Activated CD8-positive, alpha-beta T cell treated with anti-CD3 and anti-CD28 coated beads for 36 hours (primary cell): ENCODE measurements at regions of chr6 and their contacts with region 1.

Region 1: DNA sequence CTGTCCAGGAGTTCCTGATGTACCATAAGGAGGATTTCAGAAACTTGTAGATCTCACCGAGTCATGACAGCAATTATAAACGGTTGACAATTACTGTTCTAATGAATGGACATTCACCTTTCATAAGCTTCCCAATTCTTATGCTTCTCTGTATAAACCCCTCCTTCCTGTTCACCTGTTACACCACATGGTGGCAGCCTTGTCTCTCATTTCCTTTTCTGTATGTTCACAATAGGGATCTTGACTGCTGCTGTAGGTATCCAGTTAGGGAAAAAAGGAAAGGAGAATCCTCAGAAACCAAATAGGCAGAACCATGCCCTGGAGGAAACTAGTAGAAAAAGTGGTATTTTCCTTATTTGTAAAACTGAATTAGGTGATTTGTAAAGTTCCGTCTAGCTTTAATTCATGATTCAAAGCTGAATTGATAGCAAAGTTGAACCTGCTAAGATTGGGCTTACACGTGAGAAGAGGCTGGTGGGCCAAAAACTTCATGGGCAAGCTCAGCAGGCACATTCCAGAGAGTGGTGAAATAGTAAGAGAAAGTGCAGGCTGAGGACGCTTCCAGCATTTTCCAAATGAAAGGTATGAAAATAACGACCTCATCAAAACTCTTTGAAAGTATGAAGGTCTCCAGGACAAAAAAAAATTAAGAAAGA is 29.0 kb upstream of the TBPL1 start:
- DNase-seq: peak; percentile 76
- ATAC-seq: peak; percentile 82
- H3K4me3 Mint-ChIP-seq: no peak overlapping the region
- H3K27ac Mint-ChIP-seq: no peak overlapping the region
- H3K4me1 Mint-ChIP-seq: no peaks in the 10 kb centered on the region
- H3K27me3 Mint-ChIP-seq: peaks cover 20% of the 10 kb centered on the region
- CTCF ChIP-seq: peak; percentile 89

Region 2: GRCh38 chr6:133939778-133940667 is 16.0 kb after region 1 on chr6:
- CTCF ChIA-PET with region 1: interaction called, 30 read pairs
- POLR2A ChIA-PET with region 1: interaction called, 4 read pairs
- intact Hi-C with region 1: no loop called
- DNase-seq: no peak
- ATAC-seq: no peak
- H3K4me3 Mint-ChIP-seq: no peak overlapping the region
- H3K27ac Mint-ChIP-seq: no peak overlapping the region
- H3K4me1 Mint-ChIP-seq: no peaks in the 10 kb centered on the region
- H3K27me3 Mint-ChIP-seq: peaks cover 18% of the 10 kb centered on the region
- CTCF ChIP-seq: no peak

Region 3: GRCh38 chr6:133966654-133967329 is 42.7 kb after region 1 on chr6:
- CTCF ChIA-PET with region 1: interaction called, 86 read pairs
- POLR2A ChIA-PET with region 1: no interaction called
- intact Hi-C with region 1: no loop called
- DNase-seq: no peak
- ATAC-seq: no peak
- H3K4me3 Mint-ChIP-seq: no peak overlapping the region
- H3K27ac Mint-ChIP-seq: no peak overlapping the region
- H3K4me1 Mint-ChIP-seq: peaks cover 57% of the 10 kb centered on the region
- H3K27me3 Mint-ChIP-seq: no peaks in the 10 kb centered on the region
- CTCF ChIP-seq: no peak

Region 4: GRCh38 chr6:133991096-133991593 is 67.1 kb after region 1 on chr6:
- CTCF ChIA-PET with region 1: interaction called, 16 read pairs
- POLR2A ChIA-PET with region 1: no interaction called
- intact Hi-C with region 1: no loop called
- DNase-seq: no peak
- ATAC-seq: no peak
- H3K4me3 Mint-ChIP-seq: no peak overlapping the region
- H3K27ac Mint-ChIP-seq: no peak overlapping the region
- H3K4me1 Mint-ChIP-seq: peaks cover 7% of the 10 kb centered on the region
- H3K27me3 Mint-ChIP-seq: no peaks in the 10 kb centered on the region
- CTCF ChIP-seq: no peak

Region 5: DNA sequence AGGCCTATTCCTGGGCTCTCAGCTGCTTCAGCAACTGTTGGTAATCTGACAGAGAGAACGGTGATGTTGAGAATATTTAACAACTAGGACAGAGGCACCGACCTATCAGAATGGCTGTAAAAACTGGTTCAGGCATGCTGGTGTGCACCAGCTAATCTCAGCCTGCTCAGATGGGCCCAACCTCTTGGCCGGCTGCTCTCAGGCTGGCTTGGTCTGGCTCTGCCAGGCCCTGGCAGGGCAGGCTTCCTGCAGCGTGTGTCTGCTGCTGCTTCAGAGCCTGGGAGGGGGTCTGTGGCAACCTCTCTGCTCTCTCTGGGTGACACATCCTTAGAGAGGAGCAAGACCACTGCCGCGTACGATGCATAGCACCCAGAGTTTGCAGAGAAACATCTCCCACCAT is 123.6 kb after region 1 on chr6:
- CTCF ChIA-PET with region 1: interaction called, 13 read pairs
- POLR2A ChIA-PET with region 1: no interaction called
- intact Hi-C with region 1: no loop called
- DNase-seq: no peak
- ATAC-seq: no peak
- H3K4me3 Mint-ChIP-seq: no peak overlapping the region
- H3K27ac Mint-ChIP-seq: no peak overlapping the region
- H3K4me1 Mint-ChIP-seq: peaks cover 6% of the 10 kb centered on the region
- H3K27me3 Mint-ChIP-seq: peaks cover 5% of the 10 kb centered on the region
- CTCF ChIP-seq: no peak

Region 6: GRCh38 chr6:134097114-134097707 is 173.1 kb after region 1 on chr6:
- CTCF ChIA-PET with region 1: interaction called, 410 read pairs
- POLR2A ChIA-PET with region 1: interaction called, 3 read pairs
- intact Hi-C with region 1: loop called (anchors 1 kb)
- DNase-seq: peak; percentile 72
- ATAC-seq: peak; percentile 49
- H3K4me3 Mint-ChIP-seq: no peak overlapping the region
- H3K27ac Mint-ChIP-seq: no peak overlapping the region
- H3K4me1 Mint-ChIP-seq: no peaks in the 10 kb centered on the region
- H3K27me3 Mint-ChIP-seq: peaks cover 14% of the 10 kb centered on the region
- CTCF ChIP-seq: peak; percentile 67

Region 7: DNA sequence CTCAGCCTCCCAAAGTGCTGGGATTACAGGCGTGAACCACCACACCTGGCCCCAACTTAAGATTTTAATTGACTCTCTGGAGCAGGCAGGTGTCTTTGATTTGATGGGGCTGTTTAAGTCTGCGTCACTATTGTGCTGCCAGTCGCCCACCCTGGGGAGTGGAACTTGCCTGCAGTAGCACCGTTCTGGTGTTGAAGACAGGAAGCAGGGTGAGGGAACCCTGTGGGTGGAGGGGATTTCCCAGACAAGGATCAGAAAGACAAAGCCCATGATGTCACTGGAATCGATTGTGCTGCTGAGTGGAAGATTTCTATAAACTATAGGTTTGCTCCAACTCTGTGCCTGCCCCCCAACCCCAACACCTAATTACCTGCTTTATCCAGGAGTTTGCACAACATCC is 1014.8 kb after region 1 on chr6:
- CTCF ChIA-PET with region 1: interaction called, 10 read pairs
- POLR2A ChIA-PET with region 1: no interaction called
- intact Hi-C with region 1: no loop called
- DNase-seq: peak; percentile 93
- ATAC-seq: peak; percentile 99
- H3K4me3 Mint-ChIP-seq: no peak overlapping the region
- H3K27ac Mint-ChIP-seq: peak overlapping the region; percentile 43
- H3K4me1 Mint-ChIP-seq: peaks cover 25% of the 10 kb centered on the region
- H3K27me3 Mint-ChIP-seq: no peaks in the 10 kb centered on the region
- CTCF ChIP-seq: no peak